CD14-positive monocyte (primary cell): ENCODE measurements at regions of chr17 and their contacts with region 1.

Region 1: DNA sequence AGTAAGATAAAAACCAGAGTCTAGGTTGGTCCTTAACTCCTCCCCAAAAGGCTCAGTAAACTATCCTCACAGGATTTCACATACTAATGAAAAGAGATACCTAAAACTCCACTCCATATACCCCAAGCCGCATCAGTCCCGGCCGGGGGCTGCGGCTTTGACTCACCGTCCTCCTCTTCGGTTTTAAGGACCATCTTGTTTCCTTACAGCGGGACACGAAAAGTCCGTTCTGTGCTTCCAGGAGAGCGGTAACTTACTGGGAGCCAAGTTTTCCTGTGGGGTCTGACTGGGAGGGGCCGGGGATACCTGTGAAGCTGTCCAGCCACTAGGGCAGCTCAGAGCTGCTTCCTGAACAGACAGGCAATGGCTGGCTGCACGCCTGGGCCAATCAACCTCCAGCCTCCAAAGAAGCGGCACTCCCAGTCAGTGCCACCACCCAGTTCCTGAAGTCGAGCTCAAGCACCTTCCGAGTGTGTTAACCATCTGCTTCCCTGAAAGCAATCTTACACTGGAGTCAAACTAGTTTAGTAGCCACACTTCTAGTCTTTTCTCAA is 45.5 kb downstream of the CYTH1 start:
- DNase-seq: peak; percentile 69 to 82 (median 78)
- H3K4me3 ChIP-seq: peak overlapping the region; percentile 71 to 91 (median 84)
- H3K4me3 Mint-ChIP-seq: peak overlapping the region; percentile 88 to 100
- H3K27ac ChIP-seq: peak overlapping the region; percentile 91 to 92
- H3K27ac Mint-ChIP-seq: peak overlapping the region; percentile 95 to 99 (median 97)
- H3K4me1 ChIP-seq: peaks cover 44 to 69% of the 10 kb centered on the region in 2 donors
- H3K4me1 Mint-ChIP-seq: peaks cover 82% of the 10 kb centered on the region
- H3K27me3 ChIP-seq: no peaks in the 10 kb centered on the region
- H3K27me3 Mint-ChIP-seq: peaks cover 0 to 1% (median 0%) of the 10 kb centered on the region in 3 donors
- CTCF ChIP-seq: no peak

Region 2: DNA sequence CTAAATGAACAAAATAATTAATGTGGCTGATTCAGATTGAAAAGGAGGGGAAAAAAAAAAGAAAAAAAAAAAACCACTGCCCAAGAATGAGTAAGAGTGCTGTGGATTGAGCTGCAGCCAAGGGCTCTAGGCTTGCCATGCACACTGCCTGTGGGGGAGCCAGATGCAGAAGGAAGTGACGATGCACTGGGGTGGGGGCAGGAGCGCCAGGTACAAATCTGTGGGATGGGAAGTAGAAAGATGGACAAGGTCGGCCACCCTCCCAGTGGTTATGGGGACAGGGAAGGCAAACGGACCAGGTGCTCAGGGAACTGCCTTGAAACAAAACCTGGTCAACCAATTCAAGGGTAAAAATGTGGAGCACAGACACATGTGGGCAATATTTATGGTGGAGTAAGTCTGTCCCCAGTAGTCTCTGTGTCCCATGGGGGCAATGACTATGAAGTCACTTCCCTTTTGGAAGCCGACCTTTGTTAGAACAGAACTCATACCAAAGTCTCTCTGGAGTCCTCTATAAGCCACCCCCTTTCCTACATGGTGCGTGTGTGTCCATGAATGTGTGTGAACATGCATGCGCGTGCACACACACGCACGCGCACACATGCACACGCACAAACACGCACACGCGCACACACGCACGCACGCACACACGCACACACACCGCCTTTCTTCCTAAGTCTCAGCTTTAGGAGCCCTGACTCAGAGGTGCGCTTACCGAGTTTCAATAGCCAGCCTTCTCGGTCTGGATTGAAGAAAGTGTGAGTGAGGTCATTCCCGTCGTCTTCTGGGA is 38.9 kb before region 1 on chr17:
- intact Hi-C with region 1: no loop called
- DNase-seq: no peak
- H3K4me3 ChIP-seq: no peak overlapping the region
- H3K4me3 Mint-ChIP-seq: no peak overlapping the region
- H3K27ac ChIP-seq: peak overlapping the region in 1 of 2 donors; percentile 42
- H3K27ac Mint-ChIP-seq: peak overlapping the region in 6 of 7 donors; percentile 16 to 83 (median 52)
- H3K4me1 ChIP-seq: no peaks in the 10 kb centered on the region
- H3K4me1 Mint-ChIP-seq: peaks cover 3% of the 10 kb centered on the region
- H3K27me3 ChIP-seq: no peaks in the 10 kb centered on the region
- H3K27me3 Mint-ChIP-seq: peaks cover 0 to 1% (median 0%) of the 10 kb centered on the region in 3 donors
- CTCF ChIP-seq: no peak

Region 3: GRCh38 chr17:78781948-78782916 is 45.6 kb after region 1 on chr17 and contains the start of gene CYTH1:
- intact Hi-C with region 1: loop called (anchors 2 to 5 kb)
- DNase-seq: peak; percentile 84 to 96 (median 95)
- H3K4me3 ChIP-seq: peak within 1 kb of the TSS; percentile 73 to 93 (median 86)
- H3K4me3 Mint-ChIP-seq: peak within 1 kb of the TSS; percentile 95 to 97
- H3K27ac ChIP-seq: peak within 1 kb of the TSS; percentile 90 to 93
- H3K27ac Mint-ChIP-seq: peak within 1 kb of the TSS; percentile 92 to 95 (median 94)
- H3K4me1 ChIP-seq: peaks cover 47 to 51% of the 10 kb centered on the region in 2 donors
- H3K4me1 Mint-ChIP-seq: peaks cover 45% of the 10 kb centered on the region
- H3K27me3 ChIP-seq: no peaks in the 10 kb centered on the region
- H3K27me3 Mint-ChIP-seq: peaks cover 0 to 2% (median 0%) of the 10 kb centered on the region in 3 donors
- CTCF ChIP-seq: no peak
- polyA plus RNA-seq, gene CYTH1: 68.6 to 211 (median 80.9) TPM

Region 4: DNA sequence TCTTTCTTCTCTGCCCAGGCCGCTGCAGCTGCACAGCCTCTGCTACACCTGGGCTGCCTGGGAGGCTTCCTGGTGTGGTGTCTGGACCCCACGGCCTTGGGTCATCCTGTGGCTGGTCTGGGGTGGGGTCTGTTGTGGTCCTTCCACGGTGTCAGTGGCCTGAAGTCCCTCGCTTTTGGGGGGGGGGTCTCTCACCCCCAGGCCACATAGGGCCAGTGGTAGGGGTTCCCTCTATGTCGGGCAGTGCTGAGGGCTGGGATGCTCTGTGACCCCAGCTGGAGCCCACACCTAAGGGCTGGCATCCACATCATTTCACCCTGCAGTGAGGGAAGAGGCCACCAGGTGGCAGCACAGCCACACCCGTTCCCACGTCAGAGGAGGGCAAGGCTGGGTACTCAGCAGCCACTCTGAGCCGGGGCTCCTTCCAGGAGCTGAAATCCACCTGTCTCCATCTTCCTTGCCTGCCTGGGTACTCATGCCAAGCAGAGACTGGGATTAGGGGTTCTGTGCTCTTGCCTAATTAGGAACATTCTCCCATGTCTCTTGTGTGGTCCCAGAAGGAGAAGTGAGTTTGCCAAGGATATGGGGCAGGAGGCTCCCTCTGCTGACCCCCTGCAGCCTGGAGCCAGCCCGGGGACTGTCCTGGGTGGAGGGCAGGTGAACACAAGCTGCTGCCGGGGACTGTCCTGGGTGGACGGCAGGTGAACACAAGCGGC is 351.0 kb after region 1 on chr17:
- intact Hi-C with region 1: no loop called
- DNase-seq: peak; percentile 42 to 55 (median 51)
- H3K4me3 ChIP-seq: no peak overlapping the region
- H3K4me3 Mint-ChIP-seq: no peak overlapping the region
- H3K27ac ChIP-seq: no peak overlapping the region
- H3K27ac Mint-ChIP-seq: no peak overlapping the region
- H3K4me1 ChIP-seq: no peaks in the 10 kb centered on the region
- H3K4me1 Mint-ChIP-seq: no peaks in the 10 kb centered on the region
- H3K27me3 ChIP-seq: no peaks in the 10 kb centered on the region
- H3K27me3 Mint-ChIP-seq: peaks cover 0 to 5% (median 4%) of the 10 kb centered on the region in 3 donors
- CTCF ChIP-seq: peak; percentile 95